ENCODE measurements at regions of chr17 and their contacts with region 1.

Region 1: GRCh38 chr17:48678141-48678971 is 44.0 kb downstream of the PRAC1 start:
- DNase-seq: peak; percentile 79
- H3K4me3 ChIP-seq: no peak overlapping the region
- H3K27ac ChIP-seq: no peak overlapping the region
- H3K4me1 ChIP-seq: no peaks in the 10 kb centered on the region
- H3K27me3 ChIP-seq: no peaks in the 10 kb centered on the region
- CTCF ChIP-seq: peak; percentile 78 to 97 (median 95)
- POLR2A ChIP-seq: no peak

Region 2: DNA sequence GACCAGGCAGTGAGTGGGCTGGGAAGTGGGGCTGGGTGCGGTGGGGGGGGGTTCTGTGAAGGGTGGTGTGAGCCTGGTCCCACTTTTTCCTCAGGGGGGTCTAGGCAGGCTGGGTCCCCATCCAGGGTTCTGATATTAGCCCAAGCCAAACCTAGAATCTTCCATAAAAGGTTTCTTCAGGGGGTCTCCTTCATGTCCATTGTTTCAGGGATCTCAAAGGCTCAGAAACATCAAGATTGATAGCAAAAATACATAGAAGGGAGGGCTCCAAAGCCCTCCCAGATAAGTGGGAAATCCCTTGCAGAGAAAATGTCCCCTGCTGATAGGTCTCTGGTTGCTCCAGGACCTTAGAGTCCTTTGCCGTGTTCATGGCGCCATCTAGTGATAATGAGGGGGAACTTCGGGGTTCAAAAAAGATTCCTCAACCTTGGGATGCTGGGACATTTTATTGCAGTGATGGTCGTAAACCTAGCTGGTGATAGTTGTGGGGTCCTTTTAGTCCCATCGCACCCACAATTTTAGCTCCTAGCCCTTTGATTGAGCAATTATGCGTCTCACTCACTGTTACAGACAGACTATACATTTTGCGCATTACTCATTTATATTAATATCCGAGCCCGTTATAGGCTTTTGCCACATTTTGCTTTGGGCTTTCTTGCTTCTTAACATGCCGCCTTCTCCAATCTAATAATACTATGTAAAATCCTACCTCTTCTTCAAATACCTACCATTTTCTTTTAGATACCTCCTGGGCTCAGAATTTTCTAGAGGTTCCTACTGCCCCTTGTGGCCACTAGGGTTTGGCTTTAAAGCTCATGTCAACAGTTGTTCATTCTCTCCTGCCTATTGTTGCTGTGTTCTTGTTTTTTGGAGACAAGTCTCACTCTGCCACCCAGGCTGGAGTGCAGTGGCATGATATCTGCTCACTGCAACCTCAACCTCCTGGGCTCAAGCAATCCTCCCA is 353.9 kb after region 1 on chr17:
- intact Hi-C with region 1: loop called (anchors 10 kb)
- DNase-seq: peak; percentile 15
- H3K4me3 ChIP-seq: no peak overlapping the region
- H3K27ac ChIP-seq: no peak overlapping the region
- H3K4me1 ChIP-seq: no peaks in the 10 kb centered on the region
- H3K27me3 ChIP-seq: no peaks in the 10 kb centered on the region
- CTCF ChIP-seq: peak in 3 of 4 experiments; percentile 55 to 59 (median 58)
- POLR2A ChIP-seq: no peak

Measured in prostate gland (tissue), 2 donors.